Mammary epithelial cell (primary cell): ENCODE measurements at regions of chr22 and their contacts with region 1.

Region 1: GRCh38 chr22:41857155-41857859 is 24.4 kb downstream of the SREBF2 start:
- DNase-seq: peak; percentile 88
- H3K4me3 ChIP-seq: no peak overlapping the region
- H3K27ac ChIP-seq: peak overlapping the region; percentile 41
- H3K4me1 ChIP-seq: peaks cover 59% of the 10 kb centered on the region
- H3K27me3 ChIP-seq: no peaks in the 10 kb centered on the region
- CTCF ChIP-seq: peak; percentile 66

Region 2: DNA sequence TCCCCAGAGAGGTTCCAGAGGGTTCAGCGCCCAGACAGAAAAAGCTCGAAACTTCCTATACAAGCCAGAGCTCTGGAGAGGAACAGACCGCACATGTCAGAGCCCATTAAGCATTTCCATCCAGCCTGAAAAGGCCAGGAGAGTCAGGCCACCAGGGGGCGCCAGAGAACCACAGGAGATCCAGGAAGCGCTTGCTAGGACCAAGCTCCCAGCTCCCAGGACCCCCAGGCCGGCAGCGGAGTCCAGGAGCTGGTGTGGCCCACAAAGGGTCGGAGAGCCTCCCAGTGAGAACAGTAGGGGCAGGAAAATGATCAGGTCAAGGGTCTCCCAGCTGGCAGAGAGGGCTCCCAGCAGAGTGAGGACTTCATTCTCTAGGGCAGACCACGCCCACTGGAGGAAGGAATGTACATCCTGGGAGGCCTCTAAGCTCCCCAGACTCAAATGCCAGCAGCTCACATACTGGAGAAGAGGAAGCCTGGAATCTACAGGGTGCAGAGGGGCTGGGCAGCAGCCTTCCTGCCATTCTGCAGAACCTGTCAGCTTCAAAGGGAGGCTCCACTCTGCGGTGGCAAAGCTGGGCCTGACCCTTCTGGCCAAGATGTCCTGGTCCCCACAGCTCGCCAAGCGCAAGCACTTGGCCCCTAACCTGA is 160.1 kb before region 1 on chr22:
- CTCF ChIA-PET with region 1: interaction called, 3 read pairs
- dilution Hi-C with region 1: no loop called
- in situ Hi-C with region 1: no loop called
- intact Hi-C with region 1: loop called (anchors 1 kb)
- DNase-seq: peak; percentile 64
- H3K4me3 ChIP-seq: peak overlapping the region in 1 of 3 experiments; percentile 28
- H3K27ac ChIP-seq: no peak overlapping the region
- H3K4me1 ChIP-seq: peaks cover 17% of the 10 kb centered on the region
- H3K27me3 ChIP-seq: no peaks in the 10 kb centered on the region
- CTCF ChIP-seq: peak; percentile 88 to 98

Region 3: DNA sequence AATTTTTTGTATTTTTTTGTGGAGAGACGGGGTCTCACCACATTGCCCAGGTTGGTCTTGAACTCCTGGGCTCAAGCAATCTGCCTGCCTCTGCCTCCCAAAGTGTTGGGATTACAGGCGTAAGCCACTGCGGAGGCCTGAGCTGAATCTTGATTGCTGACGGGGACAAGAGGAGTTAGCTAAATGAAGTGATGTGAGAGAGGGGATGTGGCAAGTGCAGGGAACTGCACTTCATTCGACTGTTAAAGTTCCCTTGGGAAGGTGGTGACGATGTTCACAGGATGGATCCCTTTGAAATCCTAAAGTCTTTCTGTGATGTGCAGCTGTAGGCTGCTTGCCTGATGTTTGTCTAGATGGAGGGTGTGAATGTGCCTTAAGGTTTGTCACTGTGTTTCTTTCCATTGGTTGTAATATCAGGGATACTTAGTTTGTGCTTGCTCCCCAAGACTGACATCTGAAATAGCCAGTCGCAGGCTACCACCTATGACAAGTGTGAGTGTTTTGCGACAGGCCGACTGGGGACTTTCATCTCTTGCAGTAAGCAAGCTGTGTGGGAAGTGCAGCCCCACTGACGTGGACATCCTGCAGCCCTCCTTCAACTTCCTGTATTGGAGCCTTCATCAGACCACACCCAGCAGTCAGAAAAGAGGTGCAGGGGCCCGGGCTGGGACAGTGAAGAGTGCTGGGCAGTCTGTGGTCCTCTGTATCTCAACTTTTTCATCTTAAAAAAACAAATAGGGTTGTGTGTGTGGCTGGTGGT is 76.4 kb before region 1 on chr22:
- CTCF ChIA-PET with region 1: no interaction called
- dilution Hi-C with region 1: no loop called
- in situ Hi-C with region 1: no loop called
- intact Hi-C with region 1: no loop called
- DNase-seq: no peak
- H3K4me3 ChIP-seq: no peak overlapping the region
- H3K27ac ChIP-seq: no peak overlapping the region
- H3K4me1 ChIP-seq: no peaks in the 10 kb centered on the region
- H3K27me3 ChIP-seq: no peaks in the 10 kb centered on the region
- CTCF ChIP-seq: no peak

Region 4: DNA sequence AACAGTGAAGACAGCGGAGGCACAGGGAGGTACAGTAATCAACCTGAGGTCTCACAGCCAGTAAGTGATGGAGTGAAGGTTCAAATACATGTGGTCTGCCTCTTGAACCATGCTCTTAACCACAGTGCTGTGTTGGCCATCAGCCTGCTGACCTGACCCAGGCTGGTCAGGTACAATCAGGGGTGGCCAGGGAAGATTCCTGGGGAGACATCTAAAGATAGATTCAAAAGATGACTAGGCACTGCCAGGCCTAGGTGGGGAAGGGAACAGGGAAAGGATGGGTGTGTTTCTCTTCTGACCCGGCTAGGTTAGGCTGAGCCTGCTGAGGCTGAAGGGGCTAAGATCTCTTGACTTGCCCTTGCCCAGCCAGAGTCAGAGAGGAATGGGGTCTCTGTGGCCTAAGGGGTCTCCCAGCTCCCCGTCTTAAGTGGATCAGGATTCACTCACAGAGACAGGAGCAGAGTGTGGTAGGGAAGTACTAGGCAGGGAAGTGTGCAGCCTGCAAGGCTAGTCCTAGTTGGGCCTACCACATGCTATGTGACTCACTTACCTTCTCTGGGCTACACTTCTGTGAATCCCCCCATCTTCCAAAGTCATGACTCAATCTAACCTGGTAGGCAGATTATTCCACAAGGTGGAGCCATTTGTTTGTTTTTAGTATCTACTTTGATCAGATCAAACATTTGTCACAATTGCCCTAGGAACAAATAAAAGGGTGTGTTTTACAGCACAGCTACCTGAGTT is 34.8 kb before region 1 on chr22:
- CTCF ChIA-PET with region 1: no interaction called
- dilution Hi-C with region 1: no loop called
- in situ Hi-C with region 1: no loop called
- intact Hi-C with region 1: loop called (anchors 1 kb)
- DNase-seq: peak; percentile 86
- H3K4me3 ChIP-seq: no peak overlapping the region
- H3K27ac ChIP-seq: no peak overlapping the region
- H3K4me1 ChIP-seq: peaks cover 9% of the 10 kb centered on the region
- H3K27me3 ChIP-seq: no peaks in the 10 kb centered on the region
- CTCF ChIP-seq: peak; percentile 58 to 63

Region 5: GRCh38 chr22:41841085-41841659 is 16.1 kb before region 1 on chr22:
- CTCF ChIA-PET with region 1: no interaction called
- dilution Hi-C with region 1: no loop called
- in situ Hi-C with region 1: no loop called
- intact Hi-C with region 1: loop called (anchors 2 kb)
- DNase-seq: no peak
- H3K4me3 ChIP-seq: no peak overlapping the region
- H3K27ac ChIP-seq: peak overlapping the region; percentile 14
- H3K4me1 ChIP-seq: peaks cover 63% of the 10 kb centered on the region
- H3K27me3 ChIP-seq: no peaks in the 10 kb centered on the region
- CTCF ChIP-seq: no peak

Region 6: GRCh38 chr22:42169055-42169469 is 311.8 kb after region 1 on chr22:
- CTCF ChIA-PET with region 1: interaction called, 14 read pairs
- dilution Hi-C with region 1: no loop called
- in situ Hi-C with region 1: no loop called
- intact Hi-C with region 1: no loop called
- DNase-seq: peak; percentile 17
- H3K4me3 ChIP-seq: no peak overlapping the region
- H3K27ac ChIP-seq: no peak overlapping the region
- H3K4me1 ChIP-seq: peaks cover 20% of the 10 kb centered on the region
- H3K27me3 ChIP-seq: no peaks in the 10 kb centered on the region
- CTCF ChIP-seq: peak; percentile 70 to 77